ENCODE measurements at regions of chr6 and their contacts with region 1.

Region 1: DNA sequence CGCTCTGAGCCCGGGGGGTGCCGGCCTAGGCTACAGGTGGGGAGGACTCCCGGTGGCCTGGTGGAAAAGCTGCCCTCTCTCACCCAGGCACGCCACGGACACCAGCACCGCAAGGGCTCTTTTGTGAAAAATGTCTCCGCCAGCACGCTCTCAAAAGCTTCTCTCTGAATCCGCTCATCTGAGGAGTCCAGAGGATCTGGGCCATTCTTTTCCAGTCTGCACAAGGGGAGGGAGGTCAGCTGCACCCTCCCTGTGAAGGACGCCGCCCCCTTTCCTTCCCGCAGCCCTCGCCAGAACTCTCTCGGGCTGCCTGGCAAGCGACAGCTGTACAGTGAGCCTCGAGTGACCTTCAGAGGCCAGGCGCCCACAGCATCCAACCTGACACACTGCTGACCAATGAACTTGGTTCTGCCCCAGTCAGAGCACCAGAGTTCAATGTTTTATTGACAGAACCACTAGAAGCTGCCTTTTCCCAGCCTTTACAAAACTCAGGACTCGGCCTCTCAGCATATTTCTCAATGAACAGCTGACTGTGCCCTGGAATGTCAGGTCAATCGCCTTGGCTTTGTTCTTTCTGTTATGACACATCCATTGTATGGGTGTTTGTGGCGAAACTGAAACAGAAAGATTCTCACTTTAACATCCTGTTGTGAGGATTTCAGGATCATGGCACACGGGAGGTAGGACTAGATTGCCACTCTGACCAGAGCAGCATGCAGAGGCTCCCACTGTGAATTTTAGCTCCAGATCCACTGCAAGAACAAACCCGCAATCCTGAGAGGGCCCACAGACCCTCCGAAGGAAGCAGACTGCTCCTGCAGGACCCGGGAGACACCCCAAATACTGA is 26.7 kb downstream of the SERPINB9 start:
- DNase-seq: peak; percentile 58
- H3K4me3 ChIP-seq: peak overlapping the region; percentile 67
- H3K27ac ChIP-seq: peak overlapping the region; percentile 79
- H3K4me1 ChIP-seq: peaks cover 88% of the 10 kb centered on the region
- CTCF ChIP-seq: no peak

Region 2: DNA sequence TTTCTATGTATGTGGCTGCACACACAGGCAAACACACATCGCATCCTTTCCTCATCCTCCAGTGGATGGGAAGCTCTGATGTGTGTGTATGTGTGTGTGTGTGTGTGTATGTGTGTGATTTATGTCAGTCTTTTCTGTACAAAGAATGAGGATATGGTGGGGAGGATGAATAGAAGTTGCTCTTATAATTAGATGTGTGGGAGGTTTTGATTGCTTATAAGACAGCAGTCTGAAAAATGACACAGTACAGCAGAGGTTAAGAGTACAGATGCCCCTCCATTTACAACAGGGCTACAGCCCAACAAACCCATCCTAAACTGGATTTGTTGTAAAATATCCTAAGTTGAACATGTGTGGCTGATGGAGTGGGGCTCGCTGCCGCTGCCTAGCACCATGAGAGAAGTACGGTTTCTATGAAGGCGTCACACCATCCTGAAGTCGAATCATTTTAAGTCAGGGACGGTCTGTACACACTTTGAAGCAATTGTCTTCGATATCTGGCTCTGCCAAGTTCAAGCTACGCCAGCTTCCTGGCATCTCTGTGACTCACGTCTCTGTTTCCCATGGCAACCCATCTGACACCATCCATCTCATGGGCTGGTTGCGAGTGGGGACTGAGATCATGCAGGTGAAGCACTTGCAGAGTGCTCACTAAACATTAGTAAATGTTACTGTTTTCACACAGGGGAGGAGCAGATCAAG is 378.4 kb before region 1 on chr6:
- CTCF ChIA-PET with region 1: no interaction called
- POLR2A ChIA-PET with region 1: no interaction called
- intact Hi-C with region 1: no loop called
- DNase-seq: no peak
- H3K4me3 ChIP-seq: no peak overlapping the region
- H3K27ac ChIP-seq: no peak overlapping the region
- H3K4me1 ChIP-seq: no peaks in the 10 kb centered on the region
- CTCF ChIP-seq: no peak

Region 3: GRCh38 chr6:2866181-2866846 is 10.1 kb before region 1 on chr6:
- CTCF ChIA-PET with region 1: interaction called, 9 read pairs
- POLR2A ChIA-PET with region 1: interaction called, 23 read pairs
- intact Hi-C with region 1: no loop called
- DNase-seq: no peak
- H3K4me3 ChIP-seq: peak overlapping the region; percentile 28
- H3K27ac ChIP-seq: peak overlapping the region; percentile 99
- H3K4me1 ChIP-seq: peaks cover 78% of the 10 kb centered on the region
- CTCF ChIP-seq: no peak

Measured in OCI-LY7 (cell line).